AG04449 (cell line): ENCODE measurements at regions of chr17 and their contacts with region 1.

Region 1: GRCh38 chr17:76182016-76182764 is 41.1 kb upstream of the FOXJ1 start:
- DNase-seq: peak; percentile 14
- H3K4me3 ChIP-seq: no peak overlapping the region
- CTCF ChIP-seq: peak; percentile 91

Region 2: GRCh38 chr17:76121932-76122430 is 60.2 kb before region 1 on chr17:
- CTCF ChIA-PET with region 1: interaction called, 109 read pairs
- POLR2A ChIA-PET with region 1: no interaction called
- DNase-seq: no peak
- H3K4me3 ChIP-seq: peak overlapping the region; percentile 23
- CTCF ChIP-seq: no peak

Region 3: GRCh38 chr17:76153640-76154039 is 28.6 kb before region 1 on chr17:
- CTCF ChIA-PET with region 1: interaction called, 28 read pairs
- POLR2A ChIA-PET with region 1: no interaction called
- DNase-seq: no peak
- H3K4me3 ChIP-seq: no peak overlapping the region
- CTCF ChIP-seq: peak; percentile 13

Region 4: DNA sequence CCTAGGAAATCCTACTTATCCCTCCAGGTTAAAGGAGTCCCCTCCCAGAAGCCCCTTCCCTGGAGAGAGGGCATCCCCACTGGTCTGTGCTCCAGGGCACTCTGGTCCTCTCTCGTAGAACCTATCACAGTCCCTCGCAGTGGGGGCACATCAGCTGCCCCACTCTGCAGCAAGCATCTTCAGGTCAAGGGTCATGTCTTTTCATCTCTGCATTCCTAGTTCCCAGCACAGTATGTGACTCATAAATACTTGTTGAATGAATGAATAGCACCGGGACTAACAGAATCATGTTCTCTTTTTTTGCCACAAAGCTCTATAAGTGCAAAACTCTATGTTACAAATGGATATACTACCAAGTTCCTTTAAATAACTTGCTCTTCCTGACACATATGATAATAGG is 22.1 kb after region 1 on chr17:
- CTCF ChIA-PET with region 1: interaction called, 38 read pairs
- POLR2A ChIA-PET with region 1: no interaction called
- DNase-seq: peak; percentile 21
- H3K4me3 ChIP-seq: no peak overlapping the region
- CTCF ChIP-seq: no peak

Region 5: GRCh38 chr17:76246080-76247066 is 64.2 kb after region 1 on chr17:
- CTCF ChIA-PET with region 1: interaction called, 19 read pairs
- POLR2A ChIA-PET with region 1: no interaction called
- DNase-seq: no peak
- H3K4me3 ChIP-seq: no peak overlapping the region
- CTCF ChIP-seq: no peak